Endothelial cell of umbilical vein (primary cell): ENCODE measurements at regions of chr2 and their contacts with region 1.

Region 1: DNA sequence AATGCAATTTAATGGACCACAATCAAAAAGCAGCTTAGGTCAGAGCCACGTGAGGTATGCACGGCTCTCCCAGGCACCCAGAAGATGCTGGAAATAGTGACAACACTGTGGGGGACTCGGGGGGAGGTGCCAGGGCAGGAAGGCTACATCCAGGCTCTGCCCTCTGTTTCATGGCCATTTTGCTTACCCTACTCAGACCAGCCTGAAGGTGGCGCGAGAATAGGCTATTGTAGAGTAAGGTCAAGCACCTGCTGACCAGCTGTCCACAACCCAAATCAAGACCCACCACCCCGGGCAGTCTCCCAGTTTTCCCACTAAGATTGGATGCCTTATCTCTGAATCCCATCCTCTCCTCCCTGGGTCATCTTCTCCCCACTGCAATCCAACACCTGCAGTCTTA is 115.7 kb downstream of the VIT start:
- DNase-seq: no peak
- H3K4me3 ChIP-seq: no peak overlapping the region
- H3K27ac ChIP-seq: no peak overlapping the region
- H3K4me1 ChIP-seq: peaks cover 3% of the 10 kb centered on the region
- H3K27me3 ChIP-seq: no peaks in the 10 kb centered on the region
- CTCF ChIP-seq: peak; percentile 19 to 28
- POLR2A ChIP-seq: no peak

Region 2: DNA sequence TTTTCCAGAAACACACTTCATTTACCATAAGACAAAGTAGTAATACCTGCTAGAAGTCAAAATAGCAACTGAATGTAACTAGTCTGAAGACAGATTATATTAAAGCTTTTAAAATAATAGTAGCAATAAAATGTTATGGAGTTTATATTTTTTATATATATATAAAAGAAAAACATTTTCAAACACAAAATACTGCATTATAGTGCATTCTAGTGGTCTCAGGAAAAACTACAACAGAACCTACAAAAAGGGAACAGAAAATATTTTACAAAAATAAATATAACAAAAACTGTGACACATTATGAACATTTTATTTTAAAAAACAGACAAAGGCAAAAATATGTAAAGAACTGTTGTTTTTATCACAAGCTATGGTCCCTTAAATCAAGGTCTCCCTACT is 106.1 kb after region 1 on chr2:
- CTCF ChIA-PET with region 1: no interaction called
- POLR2A ChIA-PET with region 1: no interaction called
- dilution Hi-C with region 1: no loop called
- intact Hi-C with region 1: no loop called
- DNase-seq: peak; percentile 10
- H3K4me3 ChIP-seq: no peak overlapping the region
- H3K27ac ChIP-seq: no peak overlapping the region
- H3K4me1 ChIP-seq: no peaks in the 10 kb centered on the region
- H3K27me3 ChIP-seq: no peaks in the 10 kb centered on the region
- CTCF ChIP-seq: peak in 1 of 2 donors; percentile 10
- POLR2A ChIP-seq: no peak

Region 3: GRCh38 chr2:37005118-37005868 is 193.1 kb after region 1 on chr2:
- CTCF ChIA-PET with region 1: interaction called, 3 read pairs
- POLR2A ChIA-PET with region 1: no interaction called
- dilution Hi-C with region 1: no loop called
- intact Hi-C with region 1: loop called (anchors 1 kb)
- DNase-seq: peak; percentile 58
- H3K4me3 ChIP-seq: no peak overlapping the region
- H3K27ac ChIP-seq: no peak overlapping the region
- H3K4me1 ChIP-seq: peaks cover 8% of the 10 kb centered on the region
- H3K27me3 ChIP-seq: no peaks in the 10 kb centered on the region
- CTCF ChIP-seq: peak; percentile 42 to 44
- POLR2A ChIP-seq: no peak